ENCODE measurements at regions of chr3 and their contacts with region 1.

Region 1: DNA sequence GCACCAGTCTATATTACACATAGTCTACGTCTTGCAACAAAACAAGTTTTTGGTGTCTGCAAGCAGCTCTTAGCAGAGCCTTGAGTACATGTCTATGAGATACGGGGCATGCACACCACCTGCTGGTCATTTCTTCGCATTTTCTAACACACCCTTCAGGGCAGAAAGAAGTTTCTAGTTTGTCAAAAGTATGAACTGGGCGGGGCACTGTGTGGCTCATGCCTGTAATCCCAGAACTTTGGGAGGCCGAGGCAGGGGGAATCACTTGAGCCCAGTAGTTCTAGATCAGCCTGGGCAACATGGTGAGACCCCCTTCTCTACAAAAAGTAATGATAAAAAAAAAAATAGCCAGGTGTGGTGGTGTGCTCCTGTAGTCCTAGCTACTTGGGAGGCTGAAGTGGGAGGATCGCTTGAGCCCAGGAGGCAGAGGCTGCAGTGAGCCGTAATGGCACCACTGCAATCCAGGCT is 64.2 kb upstream of the ARL8B start:
- H3K4me3 ChIP-seq: no peak overlapping the region
- H3K27ac ChIP-seq: 0 out of 2 replicates have a peak overlapping the region, but pooled peaks have one; percentile 10
- H3K4me1 ChIP-seq: peaks cover 3% of the 10 kb centered on the region
- CTCF ChIP-seq: peak; percentile 69

Region 2: GRCh38 chr3:4119119-4119518 is 938.8 kb before region 1 on chr3:
- CTCF ChIA-PET with region 1: no interaction called
- POLR2A ChIA-PET with region 1: no interaction called
- H3K4me3 ChIP-seq: no peak overlapping the region
- H3K27ac ChIP-seq: no peak overlapping the region
- H3K4me1 ChIP-seq: no peaks in the 10 kb centered on the region
- CTCF ChIP-seq: no peak

Region 3: GRCh38 chr3:4656059-4656458 is 401.8 kb before region 1 on chr3:
- CTCF ChIA-PET with region 1: interaction called, 19 read pairs
- POLR2A ChIA-PET with region 1: no interaction called
- H3K4me3 ChIP-seq: no peak overlapping the region
- H3K27ac ChIP-seq: no peak overlapping the region
- H3K4me1 ChIP-seq: no peaks in the 10 kb centered on the region
- CTCF ChIP-seq: peak; percentile 88

Region 4: GRCh38 chr3:4712143-4712542 is 345.7 kb before region 1 on chr3:
- CTCF ChIA-PET with region 1: interaction called, 72 read pairs
- POLR2A ChIA-PET with region 1: interaction called, 4 read pairs
- H3K4me3 ChIP-seq: no peak overlapping the region
- H3K27ac ChIP-seq: no peak overlapping the region
- H3K4me1 ChIP-seq: no peaks in the 10 kb centered on the region
- CTCF ChIP-seq: no peak

Region 5: GRCh38 chr3:4722103-4722502 is 335.8 kb before region 1 on chr3:
- CTCF ChIA-PET with region 1: interaction called, 41 read pairs
- POLR2A ChIA-PET with region 1: no interaction called
- H3K4me3 ChIP-seq: no peak overlapping the region
- H3K27ac ChIP-seq: no peak overlapping the region
- H3K4me1 ChIP-seq: no peaks in the 10 kb centered on the region
- CTCF ChIP-seq: peak; percentile 27; the same call in 1 of the 2 replicates

Region 6: GRCh38 chr3:4986782-4987537 is 70.9 kb before region 1 on chr3:
- CTCF ChIA-PET with region 1: interaction called, 19 read pairs
- POLR2A ChIA-PET with region 1: no interaction called
- H3K4me3 ChIP-seq: peak overlapping the region; percentile 30
- H3K27ac ChIP-seq: peak overlapping the region; percentile 95
- H3K4me1 ChIP-seq: peaks cover 29% of the 10 kb centered on the region
- CTCF ChIP-seq: no peak; the same call in 1 of the 2 replicates

Region 7: GRCh38 chr3:5041315-5041714 is 16.6 kb before region 1 on chr3:
- CTCF ChIA-PET with region 1: interaction called, 15 read pairs
- POLR2A ChIA-PET with region 1: no interaction called
- H3K4me3 ChIP-seq: no peak overlapping the region
- H3K27ac ChIP-seq: no peak overlapping the region
- H3K4me1 ChIP-seq: no peaks in the 10 kb centered on the region
- CTCF ChIP-seq: no peak

Region 8: GRCh38 chr3:5087209-5087608 is 29.3 kb after region 1 on chr3:
- CTCF ChIA-PET with region 1: no interaction called
- POLR2A ChIA-PET with region 1: no interaction called
- H3K4me3 ChIP-seq: no peak overlapping the region
- H3K27ac ChIP-seq: no peak overlapping the region
- H3K4me1 ChIP-seq: no peaks in the 10 kb centered on the region
- CTCF ChIP-seq: no peak